Activated CD4-positive, alpha-beta memory T cell treated with anti-CD3 and anti-CD28 coated beads, Interleukin-2, amount 10 ng/mL, durations not matched to agents 7 days and 5 days (primary cell): ENCODE measurements at regions of chr18 and their contacts with region 1.

Region 1: GRCh38 chr18:658001-658946 is 821 bp downstream of the TYMS start:
- DNase-seq: peak; percentile 85
- H3K4me3 Mint-ChIP-seq: peak overlapping the region; percentile 97
- H3K27ac Mint-ChIP-seq: peak overlapping the region; percentile 89
- H3K4me1 Mint-ChIP-seq: peaks cover 48% of the 10 kb centered on the region
- H3K27me3 Mint-ChIP-seq: no peaks in the 10 kb centered on the region

Region 2: DNA sequence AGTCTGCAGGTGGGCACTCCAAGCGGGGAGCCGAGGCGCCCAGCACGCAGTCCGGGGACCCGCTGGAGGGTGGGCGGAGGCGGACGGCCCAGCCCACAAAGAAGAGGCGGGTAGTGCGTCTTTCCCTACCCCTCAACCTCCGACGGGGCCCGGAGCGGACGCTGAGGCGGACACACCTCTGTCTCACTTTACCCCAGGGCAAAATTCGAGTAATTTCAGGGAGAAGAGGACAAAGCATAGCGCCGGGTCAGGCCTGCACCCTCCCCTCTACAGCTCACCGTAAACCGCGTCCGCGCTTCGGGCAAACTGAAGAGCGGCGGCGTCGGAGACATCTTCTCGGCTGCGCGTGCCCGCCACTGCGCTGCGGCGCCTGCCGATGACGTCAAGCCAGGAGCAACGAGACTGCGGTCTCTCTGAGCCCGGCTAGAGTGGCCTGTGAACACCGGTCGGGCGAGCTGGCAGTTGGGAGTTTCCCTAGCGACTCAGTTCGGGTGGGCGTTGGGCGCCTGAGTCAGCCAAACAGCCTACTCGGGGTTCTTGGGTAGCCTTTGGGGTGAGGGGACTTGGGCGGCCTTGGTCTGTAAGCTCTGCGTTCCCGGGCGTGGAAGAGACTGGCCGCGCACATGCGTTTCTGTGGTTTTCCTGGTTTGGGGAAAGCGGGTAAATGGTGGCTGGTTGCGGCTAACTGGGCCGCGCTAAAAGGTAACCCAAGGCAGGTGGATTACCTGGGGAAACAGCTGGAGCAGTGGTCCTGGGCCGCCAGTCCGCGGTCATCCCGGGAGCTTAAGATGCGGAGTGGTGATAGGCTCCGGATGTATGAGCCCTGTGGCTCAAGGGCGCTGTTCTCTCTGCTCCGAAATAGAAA is 390.4 kb before region 1 on chr18 and contains the start of gene THOC1:
- CTCF ChIA-PET with region 1: no interaction called
- POLR2A ChIA-PET with region 1: interaction called, 30 read pairs
- DNase-seq: peak; percentile 94
- H3K4me3 Mint-ChIP-seq: peak within 1 kb of the TSS; percentile 99
- H3K27ac Mint-ChIP-seq: peak within 1 kb of the TSS; percentile 98
- H3K4me1 Mint-ChIP-seq: peaks cover 35% of the 10 kb centered on the region
- H3K27me3 Mint-ChIP-seq: no peaks in the 10 kb centered on the region
- total RNA-seq, gene THOC1: 42.2 to 43.1 TPM

Region 3: GRCh38 chr18:644395-645004 is 13.8 kb before region 1 on chr18:
- CTCF ChIA-PET with region 1: interaction called, 3 read pairs
- POLR2A ChIA-PET with region 1: interaction called, 16 read pairs
- DNase-seq: no peak
- H3K4me3 Mint-ChIP-seq: no peak overlapping the region
- H3K27ac Mint-ChIP-seq: no peak overlapping the region
- H3K4me1 Mint-ChIP-seq: peaks cover 4% of the 10 kb centered on the region
- H3K27me3 Mint-ChIP-seq: peaks cover 23% of the 10 kb centered on the region

Region 4: GRCh38 chr18:681985-682384 is 23.7 kb after region 1 on chr18:
- CTCF ChIA-PET with region 1: interaction called, 11 read pairs
- POLR2A ChIA-PET with region 1: interaction called, 144 read pairs
- DNase-seq: peak; percentile 82
- H3K4me3 Mint-ChIP-seq: peak overlapping the region; percentile 28
- H3K27ac Mint-ChIP-seq: peak overlapping the region; percentile 90
- H3K4me1 Mint-ChIP-seq: peaks cover 36% of the 10 kb centered on the region
- H3K27me3 Mint-ChIP-seq: no peaks in the 10 kb centered on the region

Region 5: DNA sequence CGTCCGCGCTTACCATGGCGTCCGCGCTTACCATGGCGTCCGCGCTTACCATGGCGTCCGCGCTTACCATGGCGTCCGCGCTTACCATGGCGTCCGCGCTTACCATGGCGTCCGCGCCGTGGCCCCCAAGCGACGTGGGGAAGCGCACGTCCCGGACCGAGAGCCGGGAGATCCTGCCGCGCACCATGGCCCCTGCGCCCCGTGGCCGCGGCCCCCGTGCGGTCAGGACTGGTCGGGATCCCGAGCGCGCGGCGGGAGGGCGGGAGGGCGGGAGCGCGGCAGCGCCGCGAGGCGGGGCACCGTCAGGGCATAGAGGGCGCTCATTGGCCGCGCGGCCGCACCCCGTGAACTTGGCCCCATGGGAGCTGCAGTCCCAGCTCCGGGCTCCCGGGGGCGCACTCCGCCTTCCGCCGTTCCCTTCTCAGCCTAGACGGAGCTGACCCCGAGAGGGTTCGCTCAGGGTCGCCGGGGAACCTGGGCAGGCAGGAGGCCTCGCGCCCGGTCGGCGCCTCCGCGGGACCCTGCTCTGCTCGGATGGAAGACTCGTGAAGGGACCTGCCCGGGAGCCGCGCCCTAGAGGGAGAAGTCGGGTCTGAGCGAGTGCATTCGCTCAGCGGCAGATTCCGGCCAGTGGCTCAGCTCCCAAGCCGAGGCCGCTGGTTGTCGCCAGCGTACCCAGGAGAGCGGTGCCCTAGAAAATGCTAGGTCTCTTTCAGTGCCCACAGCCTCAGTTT is 54.3 kb after region 1 on chr18 and contains the start of gene ENOSF1:
- CTCF ChIA-PET with region 1: interaction called, 9 read pairs
- POLR2A ChIA-PET with region 1: interaction called, 38 read pairs
- DNase-seq: peak; percentile 90
- H3K4me3 Mint-ChIP-seq: peak within 1 kb of the TSS; percentile 86
- H3K27ac Mint-ChIP-seq: peak within 1 kb of the TSS; percentile 90
- H3K4me1 Mint-ChIP-seq: peaks cover 61% of the 10 kb centered on the region
- H3K27me3 Mint-ChIP-seq: no peaks in the 10 kb centered on the region
- total RNA-seq, gene ENOSF1: 65.3 to 67.1 TPM

Region 6: GRCh38 chr18:830315-830901 is 172.1 kb after region 1 on chr18:
- CTCF ChIA-PET with region 1: interaction called, 16 read pairs
- POLR2A ChIA-PET with region 1: interaction called, 5 read pairs
- DNase-seq: peak; percentile 27
- H3K4me3 Mint-ChIP-seq: peak overlapping the region; percentile 22
- H3K27ac Mint-ChIP-seq: peak overlapping the region; percentile 66
- H3K4me1 Mint-ChIP-seq: peaks cover 21% of the 10 kb centered on the region
- H3K27me3 Mint-ChIP-seq: peaks cover 6% of the 10 kb centered on the region